Activated naive CD4-positive, alpha-beta T cell treated with anti-CD3 and anti-CD28 coated beads, Interleukin-2, amount 10 ng/mL, durations not matched to agents 7 days and 5 days (primary cell): ENCODE measurements at regions of chr17 and their contacts with region 1.

Region 1: GRCh38 chr17:27544350-27545131 is 86.4 kb upstream of the LGALS9 start:
- DNase-seq: peak; percentile 73
- H3K4me3 Mint-ChIP-seq: peak overlapping the region; percentile 52
- H3K27ac Mint-ChIP-seq: peak overlapping the region; percentile 90
- H3K4me1 Mint-ChIP-seq: peaks cover 77% of the 10 kb centered on the region
- H3K27me3 Mint-ChIP-seq: no peaks in the 10 kb centered on the region

Region 2: GRCh38 chr17:27532269-27533263 is 12.0 kb before region 1 on chr17:
- CTCF ChIA-PET with region 1: no interaction called
- DNase-seq: no peak
- H3K4me3 Mint-ChIP-seq: no peak overlapping the region
- H3K27ac Mint-ChIP-seq: no peak overlapping the region
- H3K4me1 Mint-ChIP-seq: peaks cover 71% of the 10 kb centered on the region
- H3K27me3 Mint-ChIP-seq: no peaks in the 10 kb centered on the region

Region 3: GRCh38 chr17:27569257-27569722 is 24.7 kb after region 1 on chr17:
- CTCF ChIA-PET with region 1: interaction called, 10 read pairs
- DNase-seq: peak; percentile 58
- H3K4me3 Mint-ChIP-seq: no peak overlapping the region
- H3K27ac Mint-ChIP-seq: peak overlapping the region; percentile 3
- H3K4me1 Mint-ChIP-seq: peaks cover 59% of the 10 kb centered on the region
- H3K27me3 Mint-ChIP-seq: no peaks in the 10 kb centered on the region